Sigmoid colon (tissue), 7 donors: ENCODE measurements at regions of chr3 and their contacts with region 1.

Region 1: GRCh38 chr3:170908235-170909116 is at the start of gene EIF5A2:
- DNase-seq: peak; percentile 97
- H3K4me3 ChIP-seq: peak within 1 kb of the TSS; percentile 57 to 91 (median 78)
- H3K27ac ChIP-seq: peak within 1 kb of the TSS; percentile 75 to 84 (median 77)
- H3K4me1 ChIP-seq: peaks cover 0 to 20% (median 13%) of the 10 kb centered on the region in 4 donors
- H3K27me3 ChIP-seq: no peaks in the 10 kb centered on the region
- CTCF ChIP-seq: no peak
- EP300 ChIP-seq: no peak
- POLR2A ChIP-seq: peak in 1 of 2 donors; percentile 27
- total RNA-seq, gene EIF5A2: 7.2 to 10.5 (median 8.3) TPM

Region 2: DNA sequence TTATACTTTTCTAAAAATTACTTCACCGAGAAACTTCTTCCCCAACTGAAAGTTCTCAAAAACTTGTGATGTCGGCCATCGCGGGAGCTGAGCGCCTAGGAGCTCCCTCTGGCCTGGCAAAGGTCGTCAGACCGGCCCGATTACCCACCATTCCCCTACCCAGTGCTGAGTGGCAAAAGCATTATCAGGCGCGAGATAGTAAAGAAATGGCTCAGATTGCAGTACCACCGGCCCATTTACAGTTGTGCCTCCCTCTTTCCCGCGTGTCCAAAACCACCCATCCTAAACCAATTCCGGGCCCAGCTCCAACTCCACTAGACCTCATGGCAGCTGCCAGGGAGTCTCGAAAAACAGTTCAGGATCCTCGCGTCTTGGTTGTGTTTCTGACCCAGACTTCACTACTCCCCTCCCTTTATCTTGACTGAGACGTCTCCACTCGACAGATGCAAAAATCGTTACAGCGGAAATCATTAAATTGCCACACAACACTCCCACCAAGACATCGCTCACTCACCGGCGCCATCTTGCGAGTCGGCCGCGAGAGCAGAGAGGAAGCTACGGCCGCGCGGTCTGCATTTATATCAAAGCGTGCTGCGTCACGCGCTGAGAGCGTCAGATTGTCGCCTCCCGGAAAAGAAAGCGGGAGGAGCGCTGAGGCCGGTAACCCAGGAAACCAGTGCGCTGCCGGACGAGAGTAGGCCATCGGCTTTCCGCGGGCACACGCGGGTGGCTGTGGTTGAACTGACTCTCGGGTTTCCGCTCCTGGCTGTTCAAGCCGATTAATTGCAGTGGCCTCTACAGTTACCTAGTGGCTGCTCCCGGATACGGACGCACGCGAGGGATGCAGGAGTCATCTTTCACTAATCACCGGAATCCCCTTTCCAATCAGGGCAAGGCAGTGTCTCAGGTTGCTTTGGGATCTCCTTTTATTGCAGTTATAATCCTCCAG is 38.6 kb before region 1 on chr3 and contains the start of gene RPL22L1:
- intact Hi-C with region 1: loop called (anchors 1 kb)
- DNase-seq: peak; percentile 97
- H3K4me3 ChIP-seq: peak within 1 kb of the TSS; percentile 65 to 72 (median 67)
- H3K27ac ChIP-seq: peak within 1 kb of the TSS; percentile 79 to 85 (median 84)
- H3K4me1 ChIP-seq: peaks cover 0 to 29% (median 20%) of the 10 kb centered on the region in 4 donors
- H3K27me3 ChIP-seq: no peaks in the 10 kb centered on the region
- CTCF ChIP-seq: no peak
- EP300 ChIP-seq: peak in 2 of 4 donors; percentile 12 to 21
- POLR2A ChIP-seq: peak; percentile 74 to 78
- total RNA-seq, gene RPL22L1: 69.6 to 113 (median 93.0) TPM